Stomach (tissue), 19 donors: ENCODE measurements at regions of chr2 and their contacts with region 1.

Region 1: DNA sequence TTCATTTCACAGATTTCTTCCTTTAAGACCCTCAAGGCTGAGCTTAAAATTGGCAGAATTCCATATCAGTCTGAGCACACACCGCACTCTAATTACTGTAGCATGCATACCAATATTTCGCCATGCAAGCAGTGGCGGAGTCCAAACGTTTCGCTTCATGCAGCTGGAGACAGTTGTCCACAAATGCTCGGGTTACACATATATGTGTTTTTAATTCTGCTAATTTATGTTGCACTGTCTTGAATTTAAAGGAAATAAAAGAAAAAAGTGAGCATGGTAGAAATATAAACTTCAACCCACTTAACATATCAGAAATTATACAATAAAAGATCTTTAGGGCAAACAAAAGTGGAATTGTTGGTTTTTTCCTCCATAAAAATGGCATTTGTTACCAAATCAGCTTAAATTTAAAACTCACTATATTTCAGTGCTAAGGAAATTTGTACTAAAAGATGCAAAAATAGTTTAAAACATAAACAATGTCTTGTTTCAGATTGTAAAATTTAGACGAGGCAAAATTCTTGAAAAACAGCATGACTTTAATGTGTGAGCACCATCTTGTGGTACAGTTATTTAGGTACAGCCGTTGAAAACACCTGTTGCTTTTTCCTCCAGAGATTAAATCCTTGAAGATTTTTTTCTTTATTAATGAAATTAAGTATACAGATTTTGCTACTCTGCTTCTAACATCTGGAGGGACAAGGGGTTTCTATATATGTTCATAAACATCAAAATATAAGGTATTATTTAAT is 24.1 kb upstream of the KANSL1L start:
- DNase-seq: peak in 1 of 2 donors; percentile 82
- H3K4me3 ChIP-seq: peak overlapping the region; percentile 18 to 42 (median 37)
- H3K27ac ChIP-seq: no peak overlapping the region
- H3K4me1 ChIP-seq: peaks cover 0 to 30% (median 6%) of the 10 kb centered on the region in 4 donors
- H3K27me3 ChIP-seq: no peaks in the 10 kb centered on the region
- CTCF ChIP-seq: peak in 5 of 7 experiments; percentile 49 to 80 (median 64)
- EP300 ChIP-seq: no peak
- POLR2A ChIP-seq: no peak

Region 2: DNA sequence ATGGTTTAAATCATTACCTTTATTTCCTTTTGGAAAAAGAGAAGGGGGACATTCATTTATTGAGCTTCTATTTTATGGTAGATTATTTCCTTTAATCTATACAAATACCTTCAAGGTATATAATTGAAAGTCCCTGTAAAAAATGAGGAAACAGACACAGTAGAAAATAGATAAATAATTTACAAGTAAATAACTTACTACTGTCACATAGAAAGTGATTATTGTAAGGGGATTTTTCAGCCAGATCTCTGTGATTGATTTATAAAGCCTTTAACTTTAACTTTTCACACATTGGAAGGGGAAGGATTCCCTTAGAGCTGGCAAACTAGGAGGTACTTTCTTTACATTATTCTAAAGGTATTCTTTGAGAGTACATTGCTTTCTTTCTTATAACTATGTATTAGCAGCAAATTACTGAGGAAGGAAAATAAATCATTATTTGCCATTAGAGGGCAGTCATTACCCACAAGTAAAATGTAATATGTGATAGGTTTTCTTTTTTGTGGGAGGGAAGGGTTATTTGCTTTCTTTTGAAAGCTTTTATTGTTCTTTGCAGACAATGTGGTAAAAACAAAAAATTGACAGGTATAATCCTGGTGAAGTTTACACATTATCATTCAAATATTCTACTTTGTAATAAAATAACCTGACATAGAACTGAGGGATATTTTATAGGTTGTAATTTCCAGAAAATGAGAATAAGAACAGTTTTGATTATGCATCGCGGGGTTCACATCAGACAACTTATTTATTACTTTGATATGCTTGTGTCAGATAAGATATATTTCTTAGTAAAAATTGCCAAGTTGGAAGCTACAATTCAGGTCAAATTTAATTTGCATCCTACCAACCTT is 217.7 kb before region 1 on chr2:
- intact Hi-C with region 1: loop called (anchors 5 kb)
- DNase-seq: peak in 1 of 2 donors; percentile 68
- H3K4me3 ChIP-seq: no peak overlapping the region
- H3K27ac ChIP-seq: no peak overlapping the region
- H3K4me1 ChIP-seq: no peaks in the 10 kb centered on the region
- H3K27me3 ChIP-seq: no peaks in the 10 kb centered on the region
- CTCF ChIP-seq: peak in 4 of 7 experiments; percentile 53 to 61 (median 56)
- EP300 ChIP-seq: no peak
- POLR2A ChIP-seq: no peak